ENCODE measurements at regions of chr4 and their contacts with region 1.

Region 1: GRCh38 chr4:81471588-81472288 is at the start of gene RASGEF1B:
- DNase-seq: peak; percentile 98
- H3K4me3 Mint-ChIP-seq: peak within 1 kb of the TSS; percentile 88
- H3K27ac Mint-ChIP-seq: peak within 1 kb of the TSS; percentile 93
- H3K4me1 Mint-ChIP-seq: peaks cover 30% of the 10 kb centered on the region
- H3K27me3 Mint-ChIP-seq: peaks cover 12% of the 10 kb centered on the region
- total RNA-seq, gene RASGEF1B: 3.9 and 5.5 TPM in 2 replicates

Region 2: DNA sequence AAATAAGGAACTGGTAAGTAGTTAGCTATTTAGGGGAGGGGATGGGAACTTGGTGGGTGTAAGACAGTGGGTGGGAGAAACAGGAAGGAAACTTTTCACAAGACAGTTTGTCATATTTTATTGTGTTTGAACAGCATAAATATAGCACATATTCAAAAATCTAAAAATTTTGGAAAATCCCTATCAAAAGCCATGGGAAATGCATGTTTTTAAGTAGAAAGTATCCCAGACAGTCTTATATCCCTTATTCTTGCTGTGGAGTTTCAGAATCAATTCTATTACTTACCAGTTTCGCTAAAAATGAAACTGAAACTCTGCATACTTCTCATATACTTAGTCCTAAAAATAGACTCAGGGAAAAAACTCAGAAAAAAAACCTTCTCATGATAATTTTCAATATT is 22.3 kb after region 1 on chr4:
- intact Hi-C with region 1: loop called (anchors 1 kb)
- DNase-seq: no peak
- H3K4me3 Mint-ChIP-seq: peak overlapping the region; percentile 70
- H3K27ac Mint-ChIP-seq: peak overlapping the region; percentile 72
- H3K4me1 Mint-ChIP-seq: peaks cover 37% of the 10 kb centered on the region
- H3K27me3 Mint-ChIP-seq: peaks cover 1% of the 10 kb centered on the region

Region 3: GRCh38 chr4:81648576-81649275 is 177.0 kb after region 1 on chr4:
- intact Hi-C with region 1: loop called (anchors 1 kb)
- DNase-seq: peak; percentile 85
- H3K4me3 Mint-ChIP-seq: peak overlapping the region; percentile 62
- H3K27ac Mint-ChIP-seq: peak overlapping the region; percentile 76
- H3K4me1 Mint-ChIP-seq: peaks cover 57% of the 10 kb centered on the region
- H3K27me3 Mint-ChIP-seq: no peaks in the 10 kb centered on the region

Region 4: DNA sequence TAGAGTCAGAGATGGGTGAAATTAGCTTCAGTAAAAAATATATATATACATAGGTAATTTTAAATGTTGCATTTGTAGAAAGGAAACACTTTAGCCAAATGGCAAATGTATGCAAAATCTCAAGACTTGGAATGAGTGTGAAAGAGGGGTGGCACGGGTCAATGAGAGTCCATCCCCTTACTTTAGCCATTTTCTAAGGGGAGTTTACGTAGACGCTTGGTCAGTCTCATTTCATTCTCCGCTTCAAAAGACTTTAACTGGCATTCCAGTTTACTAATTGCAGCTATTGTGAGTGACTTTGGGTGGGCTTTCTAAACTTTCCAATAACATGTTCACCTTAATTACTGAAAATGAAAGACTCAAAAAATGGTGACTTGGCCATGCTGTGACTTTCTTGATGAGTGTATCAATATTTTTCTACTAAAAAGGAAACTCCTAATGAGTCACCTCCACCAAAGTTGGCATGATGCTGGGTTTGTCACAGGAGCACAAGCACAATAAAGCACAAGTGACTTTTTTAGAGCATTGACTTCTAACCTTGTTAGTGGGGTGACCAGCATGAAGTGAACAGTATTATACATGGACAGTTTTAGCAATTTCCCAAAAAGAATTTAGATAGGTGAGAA is 356.0 kb after region 1 on chr4:
- intact Hi-C with region 1: loop called (anchors 1 kb)
- DNase-seq: no peak
- H3K4me3 Mint-ChIP-seq: no peak overlapping the region
- H3K27ac Mint-ChIP-seq: peak overlapping the region; percentile 71
- H3K4me1 Mint-ChIP-seq: peaks cover 9% of the 10 kb centered on the region
- H3K27me3 Mint-ChIP-seq: no peaks in the 10 kb centered on the region

Region 5: DNA sequence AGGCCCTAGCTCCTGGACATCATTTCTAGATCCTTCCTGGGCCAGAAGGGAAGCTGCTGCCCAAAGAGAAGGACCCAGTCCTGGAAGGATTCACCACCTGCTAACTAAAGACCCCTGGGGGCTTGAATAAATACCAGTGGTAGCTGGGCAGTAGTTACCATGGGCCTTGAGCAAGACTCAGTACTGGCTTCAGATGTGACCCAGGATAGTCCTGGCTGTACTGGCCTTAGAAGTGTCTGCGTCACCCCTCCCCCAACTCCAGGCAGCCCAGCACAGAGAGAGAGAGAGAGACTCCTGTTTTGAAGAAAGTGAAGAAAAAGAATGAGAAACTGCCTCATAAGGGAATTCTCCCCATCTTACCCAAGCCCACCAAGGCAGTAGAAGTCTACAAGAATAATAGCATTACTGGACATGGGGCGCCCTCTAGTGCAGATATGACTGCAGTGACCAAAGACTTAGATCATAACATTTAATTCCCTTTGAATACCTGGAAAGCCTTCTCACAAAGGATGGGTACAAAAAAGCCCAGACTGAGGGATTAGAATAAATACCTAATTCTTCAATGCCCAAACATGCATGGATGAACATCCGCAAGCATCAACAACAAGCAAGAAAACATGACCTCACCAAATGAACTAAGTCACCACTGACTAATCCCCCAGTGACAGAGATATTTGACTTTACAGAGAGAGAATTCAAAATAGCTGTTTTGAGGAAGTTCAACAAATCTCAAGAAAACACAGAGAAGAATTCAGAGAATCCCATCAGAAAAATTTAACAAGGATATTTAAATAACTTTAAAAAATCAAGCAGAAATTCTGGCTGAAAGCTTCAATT is 730.3 kb after region 1 on chr4:
- intact Hi-C with region 1: loop called (anchors 1 kb)
- DNase-seq: peak; percentile 80
- H3K4me3 Mint-ChIP-seq: no peak overlapping the region
- H3K27ac Mint-ChIP-seq: no peak overlapping the region
- H3K4me1 Mint-ChIP-seq: peaks cover 2% of the 10 kb centered on the region
- H3K27me3 Mint-ChIP-seq: peaks cover 24% of the 10 kb centered on the region

Region 6: GRCh38 chr4:82373816-82374625 is 902.3 kb after region 1 on chr4 and contains the start of gene HNRNPD:
- intact Hi-C with region 1: loop called (anchors 1 kb)
- DNase-seq: peak; percentile 97
- H3K4me3 Mint-ChIP-seq: peak within 1 kb of the TSS; percentile 91
- H3K27ac Mint-ChIP-seq: peak within 1 kb of the TSS; percentile 98
- H3K4me1 Mint-ChIP-seq: peaks cover 38% of the 10 kb centered on the region
- H3K27me3 Mint-ChIP-seq: no peaks in the 10 kb centered on the region
- total RNA-seq, gene HNRNPD: 481 and 492 TPM in 2 replicates

Measured in activated CD4-positive, alpha-beta T cell treated with anti-CD3 and anti-CD28 coated beads, Interleukin-2, amount 10 ng/mL, durations not matched to agents 24 days and 14 days (primary cell).